Cardiac septum (tissue), 1 donor: ENCODE measurements at regions of chr22 and their contacts with region 1.

Region 1: DNA sequence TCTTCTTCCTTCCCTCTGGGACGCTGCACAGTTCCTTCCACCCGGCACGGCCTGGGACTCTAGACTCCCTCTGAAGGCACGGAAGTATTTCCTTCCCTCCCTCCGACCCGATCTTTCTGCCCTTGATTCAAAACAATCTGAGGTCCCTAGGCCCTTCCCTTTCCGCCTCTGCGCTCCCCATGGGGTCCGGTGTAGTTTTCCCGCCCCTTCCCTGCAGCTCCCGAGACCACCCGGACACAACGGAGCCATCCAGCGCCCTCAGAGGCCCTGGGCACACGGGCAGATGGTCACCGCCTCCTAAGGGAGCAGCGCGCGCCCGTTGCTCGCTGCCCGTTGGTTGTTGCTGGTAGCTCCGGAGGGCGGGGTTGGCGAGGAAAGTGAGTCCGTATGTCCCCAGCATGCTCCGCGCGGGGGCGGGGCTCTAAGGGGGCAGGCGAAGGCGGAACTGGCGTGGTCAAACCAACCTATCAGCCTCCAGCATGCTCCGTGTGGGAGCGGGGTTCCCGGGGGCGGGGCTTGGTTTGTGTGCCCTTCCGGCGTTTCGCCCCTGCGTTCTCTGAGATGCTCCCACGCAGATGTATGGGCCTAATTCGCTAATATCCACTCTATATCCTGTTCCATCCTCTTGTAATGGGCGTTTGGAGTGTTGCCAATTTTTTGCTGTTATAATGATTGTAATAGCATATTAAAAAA is 19.6 kb downstream of the MIF start:
- DNase-seq: peak; percentile 100

Region 2: DNA sequence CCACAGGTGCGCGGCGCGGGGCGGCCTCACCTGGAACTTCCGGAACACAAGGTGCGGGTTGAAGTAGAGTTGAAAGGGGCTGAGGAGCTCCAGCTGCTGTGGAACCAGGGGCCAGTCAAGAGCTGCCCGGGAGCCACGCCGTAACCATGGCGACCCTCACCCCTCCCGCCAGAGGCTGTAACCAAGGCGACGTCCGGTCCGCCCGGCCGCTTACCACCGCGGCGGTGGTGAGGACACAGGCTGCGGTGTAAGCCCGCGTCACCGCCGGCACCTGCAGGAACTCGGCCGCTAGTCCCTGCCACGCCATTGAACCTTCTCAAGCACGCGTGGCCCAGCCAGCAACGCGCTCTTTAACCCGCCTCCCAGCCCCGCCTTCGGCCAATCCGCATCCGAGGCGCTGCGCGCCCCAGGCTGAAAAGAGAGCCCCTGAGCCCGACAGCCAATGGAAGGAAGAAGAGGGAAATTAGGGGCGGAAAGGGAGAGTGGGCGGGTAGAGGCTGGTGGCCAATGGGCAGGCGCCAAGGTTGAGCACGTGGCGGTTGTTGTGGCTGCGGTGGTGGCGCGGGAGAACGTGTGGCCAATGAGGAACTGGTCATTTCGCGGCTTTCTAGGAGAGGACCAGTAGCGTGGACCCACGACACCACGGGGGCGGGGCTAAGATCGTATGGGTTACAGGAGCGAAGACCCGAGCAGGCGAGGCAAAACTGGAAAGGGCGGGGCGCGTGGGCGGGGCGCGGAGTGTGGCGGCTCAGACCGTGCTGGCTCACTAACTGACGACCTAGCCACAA is 74.9 kb before region 1 on chr22 and contains the start of gene DERL3:
- intact Hi-C with region 1: no loop called
- DNase-seq: peak; percentile 99
- total RNA-seq, gene DERL3: 2.2 TPM

Region 3: GRCh38 chr22:23862103-23862502 is 51.7 kb before region 1 on chr22:
- intact Hi-C with region 1: loop called (anchors 5 kb)
- DNase-seq: no peak